Mucosa of descending colon (tissue), 3 donors: ENCODE measurements at regions of chr14 and their contacts with region 1.

Region 1: GRCh38 chr14:20530771-20531571 is 25.6 kb downstream of the RNASE10 start:
- DNase-seq: peak; percentile 53 to 88 (median 76)
- ATAC-seq: peak; percentile 71
- H3K4me3 ChIP-seq: no peak overlapping the region
- H3K4me1 ChIP-seq: no peaks in the 10 kb centered on the region
- CTCF ChIP-seq: peak; percentile 37

Region 2: GRCh38 chr14:20350860-20351259 is 180.1 kb before region 1 on chr14:
- intact Hi-C with region 1: no loop called
- DNase-seq: no peak
- ATAC-seq: no peak
- H3K4me3 ChIP-seq: no peak overlapping the region
- H3K4me1 ChIP-seq: no peaks in the 10 kb centered on the region
- CTCF ChIP-seq: no peak

Region 3: DNA sequence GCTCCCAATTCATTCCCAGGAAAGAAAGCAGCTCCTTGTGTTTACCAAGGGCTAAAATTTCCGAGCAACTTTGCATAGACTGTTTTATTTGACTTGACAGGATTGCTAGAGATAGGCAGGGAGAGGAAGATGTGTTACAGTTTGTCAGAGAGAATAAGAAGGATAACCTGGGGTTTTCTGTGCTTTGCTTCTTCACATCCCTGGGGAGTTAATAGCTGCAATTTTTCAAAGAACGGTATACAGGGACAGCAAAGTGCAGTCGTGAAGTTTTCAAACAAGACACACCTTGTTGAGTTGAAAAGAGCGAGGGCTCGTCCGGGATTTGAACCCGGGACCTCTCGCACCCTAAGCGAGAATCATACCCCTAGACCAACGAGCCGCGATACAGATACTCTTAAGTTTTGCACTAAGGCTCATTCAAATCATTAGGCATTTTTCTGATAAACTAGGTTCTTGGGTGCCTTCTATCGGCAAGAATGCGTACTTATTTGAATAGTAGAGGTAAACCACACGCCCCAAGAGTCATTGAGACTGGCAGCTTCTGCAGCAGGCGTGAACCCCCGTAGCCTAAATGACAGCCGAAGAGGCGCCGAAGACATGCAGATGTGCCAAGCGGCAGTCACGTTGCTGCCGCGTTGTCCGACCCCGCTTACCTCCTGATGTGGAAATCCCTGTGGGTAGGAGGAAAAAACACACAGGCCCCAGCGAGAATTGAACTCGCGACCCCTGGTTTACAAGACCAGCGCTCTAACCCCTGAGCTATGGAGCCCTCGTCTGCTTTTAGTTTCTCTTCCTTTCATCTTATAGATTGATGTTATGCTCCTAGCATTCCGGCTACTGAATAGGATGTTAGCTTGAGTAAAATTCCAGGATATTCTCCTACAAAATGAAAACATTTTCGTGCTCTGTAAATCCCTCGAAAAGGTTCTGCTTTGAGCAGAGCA is 82.4 kb after region 1 on chr14:
- intact Hi-C with region 1: loop called (anchors 10 kb)
- DNase-seq: peak; percentile 85 to 92 (median 86)
- ATAC-seq: peak; percentile 85
- H3K4me3 ChIP-seq: peak overlapping the region; percentile 6
- H3K4me1 ChIP-seq: peaks cover 12% of the 10 kb centered on the region
- CTCF ChIP-seq: peak; percentile 42

Region 4: GRCh38 chr14:20690848-20691523 is 160.0 kb after region 1 on chr14:
- intact Hi-C with region 1: loop called in 1 of 2 experiments (anchors 10 kb)
- DNase-seq: peak in 1 of 3 donors; percentile 80
- ATAC-seq: peak; percentile 75
- H3K4me3 ChIP-seq: no peak overlapping the region
- H3K4me1 ChIP-seq: peaks cover 38% of the 10 kb centered on the region
- CTCF ChIP-seq: peak; percentile 78